Activated naive CD8-positive, alpha-beta T cell treated with anti-CD3 and anti-CD28 coated beads, Interleukin-2, amount 10 ng/mL, durations not matched to agents 7 days and 5 days (primary cell): ENCODE measurements at regions of chr3 and their contacts with region 1.

Region 1: DNA sequence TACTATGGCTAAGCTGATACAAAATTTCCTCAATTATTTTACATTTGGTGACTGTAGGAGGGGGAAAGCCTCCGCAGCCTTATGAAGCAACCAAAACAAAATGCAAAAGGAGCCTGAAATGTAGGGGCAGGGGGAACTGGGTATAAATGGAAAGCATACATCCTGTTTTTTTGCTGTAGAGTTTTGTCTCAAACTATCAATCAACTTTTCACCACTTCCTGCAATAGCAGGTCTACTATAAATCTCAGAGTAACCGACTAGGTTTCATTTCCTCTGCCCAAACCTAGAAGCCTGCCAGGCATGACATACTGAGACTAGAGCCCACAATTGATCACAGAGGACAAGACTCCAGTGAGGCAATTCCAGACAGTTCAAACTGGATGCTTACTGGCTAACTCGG is 91.3 kb downstream of the SHQ1 start:
- DNase-seq: no peak
- ATAC-seq: peak; percentile 100
- H3K4me3 Mint-ChIP-seq: peak overlapping the region; percentile 56
- H3K27ac Mint-ChIP-seq: peak overlapping the region; percentile 89
- H3K4me1 Mint-ChIP-seq: peaks cover 24% of the 10 kb centered on the region
- H3K27me3 Mint-ChIP-seq: no peaks in the 10 kb centered on the region

Region 2: DNA sequence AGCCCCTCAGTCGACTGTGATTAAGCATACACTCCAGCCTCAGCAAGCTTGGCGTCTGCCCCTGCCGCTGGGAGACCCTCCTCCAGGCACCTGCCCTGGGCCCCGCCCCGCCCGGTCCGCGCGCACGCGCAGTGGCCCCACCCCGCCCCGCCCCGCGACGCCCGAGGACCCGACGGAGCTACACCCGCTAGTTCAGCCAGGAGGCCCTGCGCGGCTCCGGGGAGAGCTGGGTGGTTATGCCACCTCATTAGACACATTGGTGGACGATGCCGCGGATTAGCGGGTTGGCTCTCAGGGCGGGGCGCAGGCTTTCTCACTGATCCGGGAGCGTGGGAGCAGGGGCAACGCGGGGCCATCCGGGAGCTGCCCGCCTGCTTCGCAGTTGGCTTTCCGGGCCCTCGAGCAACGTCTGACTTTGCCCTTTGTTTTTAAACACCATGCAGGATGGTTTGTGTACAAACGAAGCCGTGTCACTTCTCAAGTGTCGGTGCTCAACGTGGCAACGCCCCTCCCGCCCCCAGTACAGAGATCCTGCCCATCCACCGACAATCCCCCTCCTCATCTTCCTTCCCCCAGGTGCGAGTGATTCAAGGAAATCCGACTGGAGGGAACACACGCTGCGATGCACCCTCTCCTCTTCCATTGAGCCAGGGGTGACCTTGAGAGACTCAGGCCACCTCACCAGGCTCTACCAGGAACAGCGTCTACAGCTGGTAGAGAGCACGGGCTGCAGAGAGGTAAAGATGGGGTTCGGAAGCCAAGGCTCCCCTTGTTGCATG is 18.0 kb before region 1 on chr3:
- POLR2A ChIA-PET with region 1: interaction called, 10 read pairs
- DNase-seq: peak; percentile 82
- ATAC-seq: peak; percentile 95
- H3K4me3 Mint-ChIP-seq: peak overlapping the region; percentile 87
- H3K27ac Mint-ChIP-seq: peak overlapping the region; percentile 88
- H3K4me1 Mint-ChIP-seq: peaks cover 9% of the 10 kb centered on the region
- H3K27me3 Mint-ChIP-seq: peaks cover 2% of the 10 kb centered on the region

Region 3: GRCh38 chr3:72782521-72782920 is 25.6 kb after region 1 on chr3:
- POLR2A ChIA-PET with region 1: no interaction called
- DNase-seq: no peak
- ATAC-seq: no peak
- H3K4me3 Mint-ChIP-seq: no peak overlapping the region
- H3K27ac Mint-ChIP-seq: no peak overlapping the region
- H3K4me1 Mint-ChIP-seq: no peaks in the 10 kb centered on the region
- H3K27me3 Mint-ChIP-seq: no peaks in the 10 kb centered on the region